SK-N-SH (cell line): ENCODE measurements at regions of chr2 and their contacts with region 1.

Region 1: DNA sequence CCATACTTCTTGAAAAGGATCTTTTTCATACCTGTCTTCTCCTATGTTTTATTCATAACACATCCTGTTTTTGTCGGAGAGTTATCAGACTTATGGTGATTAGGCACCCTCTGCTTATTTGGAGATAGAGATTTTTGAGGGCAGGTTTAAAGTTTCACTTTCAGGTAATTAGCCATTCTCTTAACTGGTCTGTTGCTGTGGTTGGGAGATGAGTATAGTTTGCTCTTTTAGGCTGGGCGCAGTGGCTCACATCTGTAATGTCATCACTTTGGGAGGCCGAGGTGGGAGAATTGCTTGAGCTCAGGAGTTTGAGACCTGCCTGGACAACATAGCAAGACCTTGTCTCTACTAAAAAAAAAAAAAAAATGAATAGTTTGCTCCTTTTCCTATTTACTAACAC is 25.3 kb downstream of the SFTPB start:
- DNase-seq: no peak
- H3K4me3 ChIP-seq: no peak overlapping the region
- H3K27ac ChIP-seq: no peak overlapping the region
- H3K4me1 ChIP-seq: no peaks in the 10 kb centered on the region
- H3K27me3 ChIP-seq: no peaks in the 10 kb centered on the region
- CTCF ChIP-seq: no peak
- EP300 ChIP-seq: no peak
- RAD21 ChIP-seq: no peak

Region 2: DNA sequence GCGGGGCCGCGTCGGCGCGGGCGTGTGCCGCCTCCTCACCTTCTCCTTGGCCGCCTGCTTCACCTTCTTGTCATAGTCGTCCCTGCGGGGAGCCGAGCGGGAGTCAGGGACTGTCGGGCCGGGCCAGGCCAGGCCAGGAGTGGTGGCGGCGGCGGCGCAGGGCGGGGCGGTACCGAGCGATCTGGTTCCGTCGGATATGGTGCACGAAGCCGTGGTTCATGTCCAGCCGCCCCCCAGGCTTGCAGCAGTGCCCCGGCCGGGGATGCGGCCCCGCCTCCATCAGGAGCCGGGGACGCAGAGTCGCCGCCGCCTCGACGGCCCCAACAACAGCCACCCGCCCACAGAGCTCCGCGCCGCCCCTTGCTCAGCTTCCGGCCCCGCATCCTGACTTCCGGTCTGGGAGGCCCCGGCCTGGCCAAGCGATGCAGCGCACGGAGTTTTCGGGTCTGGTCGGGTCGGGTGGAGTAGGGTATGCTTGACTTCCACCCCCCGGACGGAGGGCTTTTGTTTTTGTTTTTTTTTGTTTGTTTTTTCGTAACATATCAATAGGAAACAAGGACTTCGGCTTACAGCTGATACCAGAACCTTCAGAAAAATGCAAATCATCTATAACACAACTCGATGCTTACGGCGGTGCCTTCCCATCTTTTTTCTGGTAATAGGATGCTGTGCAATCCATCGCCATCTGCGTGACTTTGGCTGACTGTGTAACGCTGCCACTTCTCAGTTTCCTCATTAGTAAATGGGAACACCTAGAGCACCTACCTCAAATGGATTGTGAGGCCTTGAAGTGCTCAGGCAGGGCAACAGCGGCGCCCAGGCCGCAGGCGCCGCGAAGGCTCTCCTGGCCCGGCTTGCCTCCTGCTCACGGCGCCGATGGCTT is 30.8 kb before region 1 on chr2 and contains the start of gene C2orf68:
- CTCF ChIA-PET with region 1: interaction called, 12 read pairs
- POLR2A ChIA-PET with region 1: interaction called, 6 read pairs
- DNase-seq: peak; percentile 98
- H3K4me3 ChIP-seq: peak within 1 kb of the TSS; percentile 79 to 93
- H3K27ac ChIP-seq: peak within 1 kb of the TSS; percentile 81 to 87
- H3K4me1 ChIP-seq: peaks cover 0 to 11% of the 10 kb centered on the region in 2 experiments; a peak in 2 of 4 replicates
- H3K27me3 ChIP-seq: no peaks in the 10 kb centered on the region
- CTCF ChIP-seq: no peak
- EP300 ChIP-seq: peak in 1 of 2 experiments; percentile 18; a peak in 1 of 4 replicates
- RAD21 ChIP-seq: no peak
- polyA plus RNA-seq, gene C2orf68: 14.5 and 24.3 TPM in 2 replicates

Region 3: GRCh38 chr2:85712849-85713602 is 70.3 kb after region 1 on chr2:
- CTCF ChIA-PET with region 1: interaction called, 85 read pairs
- POLR2A ChIA-PET with region 1: no interaction called
- DNase-seq: no peak
- H3K4me3 ChIP-seq: no peak overlapping the region
- H3K27ac ChIP-seq: no peak overlapping the region
- H3K4me1 ChIP-seq: peaks cover 9 to 16% of the 10 kb centered on the region in 2 experiments; a peak in 3 of 4 replicates
- H3K27me3 ChIP-seq: no peaks in the 10 kb centered on the region
- CTCF ChIP-seq: no peak
- EP300 ChIP-seq: no peak
- RAD21 ChIP-seq: no peak

Region 4: GRCh38 chr2:86238354-86238753 is 595.6 kb after region 1 on chr2:
- CTCF ChIA-PET with region 1: no interaction called
- POLR2A ChIA-PET with region 1: no interaction called
- DNase-seq: no peak
- H3K4me3 ChIP-seq: no peak overlapping the region
- H3K27ac ChIP-seq: no peak overlapping the region
- H3K4me1 ChIP-seq: peaks cover 0 to 7% of the 10 kb centered on the region in 2 experiments; a peak in 2 of 4 replicates
- H3K27me3 ChIP-seq: no peaks in the 10 kb centered on the region; the same call in 1 of the 2 replicates
- CTCF ChIP-seq: no peak
- EP300 ChIP-seq: no peak
- RAD21 ChIP-seq: no peak